MCF 10A (cell line): ENCODE measurements at regions of chr13 and their contacts with region 1.

Region 1: DNA sequence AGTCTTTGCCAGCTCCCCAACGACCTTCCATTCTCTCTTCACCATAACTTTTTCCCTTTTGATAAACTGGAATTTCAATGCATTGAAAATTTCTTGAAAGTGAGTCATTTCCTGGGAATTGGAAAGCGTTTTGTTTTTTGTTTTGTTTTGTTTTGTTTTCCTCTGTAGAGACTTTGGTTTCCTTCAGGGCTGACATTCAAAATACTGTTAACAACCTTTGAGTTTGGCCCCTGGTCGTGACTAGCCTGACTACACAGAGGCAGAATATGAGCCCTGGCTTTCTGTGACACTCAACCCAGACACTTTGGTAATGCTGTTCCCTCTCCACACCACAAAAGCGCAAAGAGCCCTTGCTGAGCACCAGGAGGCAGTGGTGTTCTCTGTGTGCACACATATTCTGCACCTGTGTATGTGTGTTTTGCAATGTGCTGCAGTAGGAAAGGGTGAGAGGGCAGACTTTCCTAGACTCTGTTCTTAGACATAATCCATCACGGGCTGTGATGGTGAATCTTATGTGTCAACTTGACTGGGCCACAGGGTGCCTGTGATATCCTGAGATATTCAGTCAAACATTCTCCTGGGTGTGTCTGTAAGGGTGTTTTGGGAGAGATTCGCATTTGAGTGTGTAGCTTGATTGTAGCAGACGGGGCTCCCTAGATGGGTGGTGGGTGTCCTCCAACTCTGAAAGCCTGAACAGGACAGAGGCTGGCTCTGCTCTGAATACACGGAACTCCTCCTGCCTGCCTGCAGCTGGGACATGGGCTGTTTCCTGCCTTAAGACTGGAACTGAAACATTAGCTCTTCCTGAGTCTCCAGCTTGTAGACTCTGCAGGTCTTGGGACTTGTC is 29.5 kb upstream of the ANKRD10 start:
- DNase-seq: peak; percentile 77
- H3K4me3 Mint-ChIP-seq: no peak overlapping the region
- H3K27ac Mint-ChIP-seq: no peak overlapping the region
- H3K4me1 Mint-ChIP-seq: peaks cover 14% of the 10 kb centered on the region
- H3K27me3 Mint-ChIP-seq: no peaks in the 10 kb centered on the region
- CTCF ChIP-seq: peak; percentile 71

Region 2: GRCh38 chr13:110485603-110486002 is 458.7 kb before region 1 on chr13:
- CTCF ChIA-PET with region 1: no interaction called
- POLR2A ChIA-PET with region 1: no interaction called
- intact Hi-C with region 1: no loop called
- DNase-seq: no peak
- H3K4me3 Mint-ChIP-seq: no peak overlapping the region
- H3K27ac Mint-ChIP-seq: no peak overlapping the region
- H3K4me1 Mint-ChIP-seq: no peaks in the 10 kb centered on the region
- H3K27me3 Mint-ChIP-seq: no peaks in the 10 kb centered on the region
- CTCF ChIP-seq: no peak

Region 3: DNA sequence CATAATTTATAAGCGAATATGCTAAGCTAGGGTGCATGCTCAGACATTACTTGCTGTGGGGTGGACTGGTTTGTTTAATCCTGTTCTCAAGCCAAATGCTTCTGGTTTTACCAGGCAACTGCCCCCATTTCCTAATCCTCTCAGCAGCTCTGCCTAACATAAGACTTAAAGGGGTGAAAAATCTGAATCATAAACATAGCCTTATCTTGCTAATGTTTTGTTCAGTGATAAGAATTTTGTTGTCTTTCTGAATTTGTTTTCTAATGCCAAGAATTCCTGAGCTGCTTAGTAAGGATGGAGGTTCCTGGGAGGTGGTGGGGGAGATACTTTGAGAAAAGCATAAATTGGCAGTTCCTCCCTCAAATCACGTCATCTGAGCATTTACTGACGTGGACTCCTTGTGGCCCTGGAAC is 188.1 kb before region 1 on chr13:
- CTCF ChIA-PET with region 1: no interaction called
- POLR2A ChIA-PET with region 1: no interaction called
- intact Hi-C with region 1: no loop called
- DNase-seq: no peak
- H3K4me3 Mint-ChIP-seq: no peak overlapping the region
- H3K27ac Mint-ChIP-seq: no peak overlapping the region
- H3K4me1 Mint-ChIP-seq: peaks cover 7% of the 10 kb centered on the region
- H3K27me3 Mint-ChIP-seq: no peaks in the 10 kb centered on the region
- CTCF ChIP-seq: no peak

Region 4: GRCh38 chr13:110989331-110989730 is 45.0 kb after region 1 on chr13:
- CTCF ChIA-PET with region 1: no interaction called
- POLR2A ChIA-PET with region 1: no interaction called
- intact Hi-C with region 1: no loop called
- DNase-seq: no peak
- H3K4me3 Mint-ChIP-seq: no peak overlapping the region
- H3K27ac Mint-ChIP-seq: no peak overlapping the region
- H3K4me1 Mint-ChIP-seq: no peaks in the 10 kb centered on the region
- H3K27me3 Mint-ChIP-seq: peaks cover 5% of the 10 kb centered on the region
- CTCF ChIP-seq: no peak

Region 5: DNA sequence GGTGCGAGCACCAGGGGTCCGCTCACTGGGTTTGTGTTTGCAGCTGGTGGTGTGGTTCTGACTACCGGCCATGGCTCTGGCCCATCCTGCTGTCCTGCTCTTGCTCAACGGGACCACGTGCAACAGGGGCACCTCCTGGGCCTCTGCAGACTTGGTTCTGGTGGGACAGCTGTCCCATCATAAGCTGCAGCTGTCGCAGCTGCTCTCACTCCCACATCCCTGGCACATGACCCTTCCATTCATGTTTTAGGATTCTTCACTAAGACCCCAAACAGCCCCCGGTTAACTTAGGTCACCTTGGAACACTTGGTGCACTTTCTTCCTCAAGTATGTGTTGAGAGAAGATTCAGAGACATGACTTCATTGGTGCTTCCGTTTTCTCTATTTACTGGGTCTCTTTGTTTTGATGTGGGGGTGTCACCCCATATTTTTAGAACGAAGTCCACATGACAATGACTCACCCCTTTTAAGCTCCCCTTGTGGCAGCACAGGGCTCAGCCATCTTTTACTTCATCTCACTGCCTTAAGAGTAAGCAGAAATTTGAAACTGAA is 102.3 kb after region 1 on chr13:
- CTCF ChIA-PET with region 1: interaction called, 66 read pairs
- POLR2A ChIA-PET with region 1: interaction called, 3 read pairs
- intact Hi-C with region 1: loop called (anchors 1 kb)
- DNase-seq: no peak
- H3K4me3 Mint-ChIP-seq: no peak overlapping the region
- H3K27ac Mint-ChIP-seq: no peak overlapping the region
- H3K4me1 Mint-ChIP-seq: peaks cover 14% of the 10 kb centered on the region
- H3K27me3 Mint-ChIP-seq: peaks cover 11% of the 10 kb centered on the region
- CTCF ChIP-seq: no peak

Region 6: GRCh38 chr13:111153279-111153976 is 209.1 kb after region 1 on chr13:
- CTCF ChIA-PET with region 1: interaction called, 3 read pairs
- POLR2A ChIA-PET with region 1: no interaction called
- intact Hi-C with region 1: loop called (anchors 10 kb)
- DNase-seq: peak; percentile 90
- H3K4me3 Mint-ChIP-seq: peak overlapping the region; percentile 93
- H3K27ac Mint-ChIP-seq: peak overlapping the region; percentile 98
- H3K4me1 Mint-ChIP-seq: peaks cover 11% of the 10 kb centered on the region
- H3K27me3 Mint-ChIP-seq: peaks cover 34% of the 10 kb centered on the region
- CTCF ChIP-seq: peak; percentile 11